ENCODE measurements at regions of chr6 and their contacts with region 1.

Region 1: DNA sequence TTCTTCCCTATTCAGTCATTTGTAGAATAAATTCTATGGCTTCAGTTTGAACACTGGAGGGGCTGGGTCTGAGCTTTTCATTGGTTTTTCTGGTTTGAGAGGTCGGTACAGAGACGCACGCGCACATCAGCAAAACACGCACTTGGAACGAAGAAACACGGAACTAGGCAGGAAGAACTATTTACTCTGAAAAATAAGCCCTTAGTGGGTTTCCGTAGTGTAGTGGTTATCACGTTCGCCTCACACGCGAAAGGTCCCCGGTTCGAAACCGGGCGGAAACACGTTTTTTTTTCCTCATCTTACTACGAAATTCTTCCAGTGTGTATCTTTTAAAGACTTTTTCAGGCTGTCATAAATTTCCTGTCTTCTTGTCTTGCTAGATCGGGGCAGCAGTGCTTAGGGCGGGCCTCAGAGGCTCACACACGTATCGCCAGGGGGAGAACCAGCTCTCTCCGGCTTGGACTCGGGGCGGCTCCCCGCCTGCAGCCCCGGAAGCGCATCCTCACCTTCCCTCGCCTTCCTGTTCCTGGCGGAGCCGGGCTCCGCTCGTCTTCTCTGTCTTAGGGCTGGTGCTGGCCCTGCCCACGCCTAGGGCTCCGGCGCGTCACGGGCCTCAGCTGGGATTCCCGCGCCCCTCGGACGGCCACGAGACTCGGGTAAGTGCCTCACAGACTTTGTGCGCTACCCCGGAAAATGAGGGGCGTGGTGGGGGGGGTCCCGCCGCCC is at the start of gene HMGN4:
- DNase-seq: peak; percentile 80 to 83
- ATAC-seq: peak; percentile 85 to 94 (median 90)
- H3K4me3 ChIP-seq: peak within 1 kb of the TSS; percentile 53 to 97 (median 77)
- H3K27ac ChIP-seq: peak within 1 kb of the TSS; percentile 74 to 97 (median 92)
- H3K4me1 ChIP-seq: peaks cover 4 to 46% (median 39%) of the 10 kb centered on the region in 9 donors
- H3K27me3 ChIP-seq: no peaks in the 10 kb centered on the region
- CTCF ChIP-seq: peak in 4 of 9 donors; percentile 9 to 40 (median 36)
- total RNA-seq, gene HMGN4: 22.8 to 35.0 (median 29.8) TPM

Region 2: GRCh38 chr6:26196846-26197648 is 341.0 kb before region 1 on chr6:
- intact Hi-C with region 1: loop called in 1 of 10 experiments (anchors 10 kb)
- DNase-seq: peak; percentile 51 to 83
- ATAC-seq: peak; percentile 52 to 68 (median 62)
- H3K4me3 ChIP-seq: peak overlapping the region; percentile 37 to 75 (median 65)
- H3K27ac ChIP-seq: peak overlapping the region in 9 of 10 donors; percentile 57 to 90 (median 81)
- H3K4me1 ChIP-seq: peaks cover 0 to 52% (median 28%) of the 10 kb centered on the region in 9 donors
- H3K27me3 ChIP-seq: peaks cover 0 to 40% (median 0%) of the 10 kb centered on the region in 7 donors
- CTCF ChIP-seq: peak in 1 of 9 donors; percentile 0

Region 3: DNA sequence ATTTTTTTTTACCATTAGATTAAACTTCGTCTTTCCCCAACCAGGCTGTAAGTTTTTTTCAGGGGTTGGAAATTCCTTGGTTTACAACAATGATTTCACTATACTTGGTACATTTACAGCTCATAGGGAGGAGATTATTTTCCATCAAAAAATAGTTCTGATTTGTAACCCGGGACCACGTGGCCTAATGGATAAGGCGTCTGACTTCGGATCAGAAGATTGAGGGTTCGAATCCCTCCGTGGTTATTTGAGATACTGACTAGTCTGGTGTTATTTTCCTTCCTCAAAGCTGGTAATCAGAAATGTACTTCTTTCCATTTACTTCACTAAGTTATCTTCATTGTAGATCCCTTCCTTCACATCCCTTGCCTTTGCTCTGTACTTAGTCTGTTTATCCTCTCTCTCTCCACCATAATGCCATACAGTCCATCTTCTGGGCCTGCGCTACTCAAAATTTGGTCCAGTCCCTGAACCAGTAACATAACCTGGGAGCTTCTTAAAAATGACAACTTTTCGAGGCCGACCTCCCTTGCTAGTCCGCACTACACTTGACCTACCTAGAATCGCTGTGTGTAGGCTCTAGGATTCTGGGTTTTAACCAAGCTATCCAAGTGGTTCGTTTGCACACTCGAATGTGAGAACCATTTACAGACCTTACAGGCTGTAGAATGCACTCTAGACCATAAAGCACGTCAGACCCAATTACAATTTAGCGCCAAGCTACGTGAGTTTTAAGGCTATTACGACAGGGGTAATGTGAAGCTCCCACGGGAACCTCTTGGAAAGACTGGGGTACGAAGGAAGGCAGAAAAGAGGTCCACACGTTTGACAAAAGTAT is 215.1 kb before region 1 on chr6:
- intact Hi-C with region 1: loop called in 1 of 10 experiments (anchors 10 kb)
- DNase-seq: peak in 1 of 2 donors; percentile 48
- ATAC-seq: peak; percentile 22 to 94 (median 86)
- H3K4me3 ChIP-seq: peak overlapping the region; percentile 28 to 64 (median 56)
- H3K27ac ChIP-seq: peak overlapping the region in 3 of 10 donors; percentile 13 to 64 (median 17)
- H3K4me1 ChIP-seq: peaks cover 0 to 25% (median 9%) of the 10 kb centered on the region in 9 donors
- H3K27me3 ChIP-seq: peaks cover 0 to 74% (median 60%) of the 10 kb centered on the region in 7 donors
- CTCF ChIP-seq: no peak

Region 4: GRCh38 chr6:26520853-26521599 is 17.0 kb before region 1 on chr6:
- intact Hi-C with region 1: loop called in 3 of 10 experiments (anchors 1 to 2 kb)
- DNase-seq: peak; percentile 89 to 90
- ATAC-seq: peak; percentile 85 to 97 (median 92)
- H3K4me3 ChIP-seq: peak overlapping the region; percentile 28 to 70 (median 58)
- H3K27ac ChIP-seq: peak overlapping the region; percentile 86 to 99 (median 95)
- H3K4me1 ChIP-seq: peaks cover 0 to 39% (median 12%) of the 10 kb centered on the region in 9 donors
- H3K27me3 ChIP-seq: no peaks in the 10 kb centered on the region
- CTCF ChIP-seq: no peak

Region 5: GRCh38 chr6:26553635-26554446 is 15.8 kb after region 1 on chr6:
- intact Hi-C with region 1: loop called in 5 of 10 experiments (anchors 1 to 2 kb)
- DNase-seq: peak; percentile 77 to 78
- ATAC-seq: peak; percentile 71 to 93 (median 85)
- H3K4me3 ChIP-seq: peak overlapping the region; percentile 30 to 64 (median 58)
- H3K27ac ChIP-seq: peak overlapping the region in 9 of 10 donors; percentile 66 to 87 (median 77)
- H3K4me1 ChIP-seq: peaks cover 0 to 47% (median 15%) of the 10 kb centered on the region in 9 donors
- H3K27me3 ChIP-seq: no peaks in the 10 kb centered on the region
- CTCF ChIP-seq: no peak